ENCODE measurements at regions of chr15 and their contacts with region 1.

Region 1: GRCh38 chr15:85330901-85331588 is 49.4 kb upstream of the AKAP13 start:
- DNase-seq: peak; percentile 77
- CTCF ChIP-seq: peak; percentile 94

Region 2: DNA sequence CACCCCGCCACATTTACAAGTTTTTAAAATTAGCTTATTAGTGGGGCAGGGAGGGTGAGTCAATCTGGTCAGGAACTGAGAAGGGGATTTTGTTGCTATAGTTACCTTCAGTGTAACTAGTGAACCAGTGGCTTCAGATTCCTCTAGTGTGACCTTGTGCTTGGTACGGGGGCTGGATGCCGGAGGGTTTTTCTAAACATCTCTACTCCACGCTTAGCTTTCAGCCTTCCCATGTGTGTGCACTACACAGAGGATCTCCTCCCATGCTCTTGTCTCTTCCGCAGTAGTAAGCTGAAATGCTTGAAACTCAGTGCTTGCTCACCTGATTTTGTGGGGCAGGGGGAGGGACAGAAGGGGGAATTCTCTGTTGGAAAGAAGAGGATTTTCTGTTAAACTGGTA is 18.6 kb before region 1 on chr15:
- CTCF ChIA-PET with region 1: interaction called, 54 read pairs
- POLR2A ChIA-PET with region 1: interaction called, 6 read pairs
- DNase-seq: peak; percentile 82
- CTCF ChIP-seq: no peak

Region 3: DNA sequence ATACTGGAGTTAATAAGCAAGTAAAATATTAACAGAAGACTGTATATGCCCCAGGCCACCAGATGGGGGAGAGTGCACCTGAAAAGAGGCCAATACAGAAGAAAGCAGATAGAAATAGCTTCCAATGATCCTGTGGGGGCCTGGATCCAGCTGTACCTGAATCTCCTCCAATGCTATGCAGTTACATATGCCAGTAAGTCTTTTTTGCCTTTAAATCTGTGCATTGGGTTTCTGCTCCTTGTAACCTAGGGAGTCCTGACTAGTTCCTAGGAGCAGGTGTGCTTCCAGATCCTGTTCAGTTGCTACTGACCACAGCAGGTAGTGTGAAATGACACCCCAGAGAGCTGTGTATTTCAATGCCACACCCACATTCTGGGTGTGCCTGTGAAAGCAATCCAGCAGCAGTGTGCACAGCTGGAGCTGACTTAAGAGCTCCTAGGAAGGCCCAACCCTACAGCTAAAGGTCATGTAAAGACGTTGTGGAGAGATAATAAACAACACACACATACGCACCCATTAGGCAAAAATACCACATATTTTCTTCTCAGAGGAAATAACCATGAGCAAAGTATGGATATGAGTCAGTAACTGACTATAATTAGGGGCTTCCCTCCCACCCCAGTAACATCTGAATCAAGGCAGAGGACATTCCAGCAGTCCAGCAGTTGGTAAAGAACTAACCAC is 12.9 kb before region 1 on chr15:
- CTCF ChIA-PET with region 1: interaction called, 54 read pairs
- POLR2A ChIA-PET with region 1: interaction called, 8 read pairs
- DNase-seq: peak; percentile 68
- CTCF ChIP-seq: peak; percentile 19

Region 4: DNA sequence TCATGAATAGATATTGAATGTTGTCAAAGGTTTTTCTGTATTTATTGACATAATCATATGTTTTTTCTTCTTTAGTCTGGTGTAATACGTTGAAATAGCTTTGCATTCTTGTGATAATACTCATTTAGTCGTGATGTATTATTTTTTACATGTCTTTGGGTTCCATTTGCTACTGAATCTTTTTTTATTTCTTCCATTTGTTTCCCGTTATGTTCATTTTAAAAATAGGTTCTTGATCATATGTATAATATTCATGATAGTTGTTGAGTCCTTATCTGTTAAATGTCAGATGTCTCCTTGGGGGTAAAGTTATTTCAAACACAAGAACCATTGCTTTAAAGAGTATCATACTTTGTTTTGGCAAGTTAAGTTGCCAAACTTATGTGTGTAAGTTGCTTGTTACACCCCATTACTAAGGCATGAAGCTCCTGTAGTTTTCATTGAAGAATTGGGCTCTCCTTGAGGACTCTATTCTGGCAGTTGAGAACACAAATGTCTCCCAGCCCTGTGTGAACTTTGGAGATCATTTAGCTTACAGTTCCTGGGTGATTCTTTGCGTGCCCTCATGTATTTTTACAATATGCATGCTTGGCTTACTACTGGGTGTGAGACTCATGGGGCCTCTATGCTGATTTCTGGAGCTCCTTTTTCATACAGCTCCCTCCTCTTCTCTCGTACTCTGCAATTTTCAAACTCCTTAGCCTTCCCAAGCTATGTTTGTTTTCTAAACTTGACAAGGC is 57.7 kb after region 1 on chr15:
- CTCF ChIA-PET with region 1: interaction called, 10 read pairs
- POLR2A ChIA-PET with region 1: interaction called, 8 read pairs
- DNase-seq: no peak
- CTCF ChIP-seq: no peak

Region 5: GRCh38 chr15:85402195-85402881 is 71.3 kb after region 1 on chr15:
- CTCF ChIA-PET with region 1: interaction called, 17 read pairs
- POLR2A ChIA-PET with region 1: no interaction called
- DNase-seq: no peak
- CTCF ChIP-seq: no peak

Region 6: DNA sequence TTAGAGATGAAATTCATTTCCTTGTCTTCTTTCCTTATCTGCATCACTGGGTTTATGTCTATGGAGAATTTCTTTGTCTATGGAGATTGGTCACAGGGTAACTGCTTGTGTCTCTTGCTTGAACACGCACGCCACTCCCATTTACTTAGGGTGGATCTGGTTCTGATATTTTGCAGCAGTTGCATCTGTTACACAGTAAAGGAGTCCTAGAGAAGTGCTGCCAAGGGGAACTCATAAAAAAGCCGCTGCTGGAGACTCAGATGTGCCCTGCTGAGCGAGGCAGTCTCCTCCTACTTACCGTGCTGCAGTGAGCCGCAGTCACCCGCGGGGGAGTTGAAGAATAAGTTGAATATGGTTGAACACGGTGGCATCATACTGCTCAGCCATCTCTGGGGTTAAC is 568.9 kb after region 1 on chr15:
- CTCF ChIA-PET with region 1: no interaction called
- POLR2A ChIA-PET with region 1: no interaction called
- DNase-seq: no peak
- CTCF ChIP-seq: no peak